ENCODE measurements at regions of chr17 and their contacts with region 1.

Region 1: GRCh38 chr17:47789611-47790561 is 31.7 kb downstream of the OSBPL7 start:
- DNase-seq: peak; percentile 73
- ATAC-seq: peak; percentile 90
- H3K4me3 Mint-ChIP-seq: peak overlapping the region; percentile 82
- H3K27ac Mint-ChIP-seq: no peak overlapping the region
- H3K4me1 Mint-ChIP-seq: peaks cover 7% of the 10 kb centered on the region; the same call in 1 of the 2 replicates
- H3K27me3 Mint-ChIP-seq: peaks cover 87% of the 10 kb centered on the region
- CTCF ChIP-seq: no peak; the same call in 1 of the 2 replicates

Region 2: GRCh38 chr17:46270032-46270431 is 1519.9 kb before region 1 on chr17:
- CTCF ChIA-PET with region 1: no interaction called
- POLR2A ChIA-PET with region 1: interaction called, 12 read pairs
- DNase-seq: no peak
- ATAC-seq: no peak
- H3K4me3 Mint-ChIP-seq: no peak overlapping the region
- H3K27ac Mint-ChIP-seq: no peak overlapping the region
- H3K4me1 Mint-ChIP-seq: peaks cover 9% of the 10 kb centered on the region
- H3K27me3 Mint-ChIP-seq: peaks cover 46% of the 10 kb centered on the region
- CTCF ChIP-seq: no peak

Region 3: GRCh38 chr17:47810205-47810821 is 20.4 kb after region 1 on chr17:
- CTCF ChIA-PET with region 1: no interaction called
- POLR2A ChIA-PET with region 1: no interaction called
- DNase-seq: peak; percentile 55
- ATAC-seq: peak; percentile 83
- H3K4me3 Mint-ChIP-seq: no peak overlapping the region
- H3K27ac Mint-ChIP-seq: no peak overlapping the region; the same call in 1 of the 2 replicates
- H3K4me1 Mint-ChIP-seq: peaks cover 6% of the 10 kb centered on the region
- H3K27me3 Mint-ChIP-seq: no peaks in the 10 kb centered on the region
- CTCF ChIP-seq: no peak

Region 4: DNA sequence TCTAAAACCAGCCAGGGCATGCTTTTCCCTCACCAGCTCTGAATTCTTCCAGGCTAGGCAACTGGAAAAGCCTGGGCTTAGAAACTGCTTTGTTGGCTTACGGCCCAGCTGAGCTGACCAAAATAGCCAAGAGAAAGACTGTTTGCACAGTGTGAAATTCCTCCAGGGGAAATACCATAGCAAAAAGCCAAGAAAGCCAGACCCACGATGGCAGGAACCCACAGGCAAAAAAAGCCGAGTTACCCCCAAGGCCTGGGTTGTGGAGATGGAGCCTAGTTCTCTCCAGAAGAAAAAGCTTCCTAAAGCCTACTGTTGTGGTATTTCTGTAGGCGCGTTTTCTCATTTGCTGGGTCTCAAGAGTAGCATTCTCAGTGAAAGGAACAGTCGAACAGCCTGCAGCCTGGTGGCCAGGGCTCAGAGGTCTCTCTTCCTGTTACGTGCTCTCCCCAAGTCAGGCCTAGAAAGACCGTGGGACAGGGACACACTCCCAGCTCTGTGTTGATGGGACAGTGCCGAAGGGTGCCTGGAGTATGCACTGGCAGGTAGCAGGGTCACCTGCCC is 115.4 kb after region 1 on chr17:
- CTCF ChIA-PET with region 1: no interaction called
- POLR2A ChIA-PET with region 1: no interaction called
- DNase-seq: no peak
- ATAC-seq: no peak
- H3K4me3 Mint-ChIP-seq: no peak overlapping the region
- H3K27ac Mint-ChIP-seq: peak overlapping the region; percentile 2
- H3K4me1 Mint-ChIP-seq: peaks cover 40% of the 10 kb centered on the region
- H3K27me3 Mint-ChIP-seq: no peaks in the 10 kb centered on the region
- CTCF ChIP-seq: no peak